Ovary (tissue), 10 donors: ENCODE measurements at regions of chr20 and their contacts with region 1.

Region 1: GRCh38 chr20:33731693-33732165 is at the start of gene ZNF341:
- DNase-seq: peak; percentile 91 to 96 (median 93)
- H3K4me3 ChIP-seq: peak within 1 kb of the TSS; percentile 37
- H3K27ac ChIP-seq: peak within 1 kb of the TSS; percentile 51 to 95
- H3K4me1 ChIP-seq: peaks cover 13% of the 10 kb centered on the region
- H3K27me3 ChIP-seq: no peaks in the 10 kb centered on the region
- CTCF ChIP-seq: peak; percentile 96 to 99 (median 96)
- EP300 ChIP-seq: no peak
- POLR2A ChIP-seq: no peak
- total RNA-seq, gene ZNF341: 1.2 to 3.8 (median 1.6) TPM

Region 2: DNA sequence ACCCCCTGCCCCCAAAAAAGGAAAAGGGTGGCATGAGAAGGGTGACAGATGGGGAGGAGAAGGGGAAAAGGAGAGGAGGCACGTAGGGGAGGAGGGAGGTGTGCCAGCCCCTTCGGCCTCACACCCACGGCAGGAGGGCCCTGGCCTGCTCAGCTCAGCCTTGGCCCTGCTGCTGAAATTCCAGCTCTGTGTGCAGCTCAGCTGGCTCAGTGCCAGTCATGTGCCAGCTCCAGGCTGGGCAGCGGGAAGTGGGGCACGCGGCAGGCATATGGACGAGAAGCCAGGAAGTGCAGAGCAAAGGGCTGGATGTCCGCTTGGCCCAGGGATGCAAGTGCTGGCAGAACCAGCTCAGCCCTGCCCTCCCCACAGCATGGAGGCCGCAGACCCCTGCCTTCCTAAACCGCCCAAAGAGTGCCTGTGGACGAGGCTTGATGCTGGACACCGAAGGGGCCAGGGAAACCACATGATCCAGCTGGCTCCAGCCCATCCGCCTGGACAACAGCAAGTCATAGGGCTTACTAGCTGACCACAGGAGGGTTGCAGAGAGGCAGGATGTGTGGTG is 1206.8 kb before region 1 on chr20:
- intact Hi-C with region 1: no loop called
- DNase-seq: peak in 1 of 5 donors; percentile 15
- H3K4me3 ChIP-seq: no peak overlapping the region
- H3K27ac ChIP-seq: no peak overlapping the region
- H3K4me1 ChIP-seq: peaks cover 10% of the 10 kb centered on the region
- H3K27me3 ChIP-seq: no peaks in the 10 kb centered on the region
- CTCF ChIP-seq: no peak
- EP300 ChIP-seq: no peak
- POLR2A ChIP-seq: no peak

Region 3: GRCh38 chr20:33666293-33667244 is 65.2 kb before region 1 on chr20 and contains the start of gene ACTL10:
- intact Hi-C with region 1: loop called in 2 of 4 experiments (anchors 5 to 10 kb)
- DNase-seq: peak; percentile 99 to 100 (median 99)
- H3K4me3 ChIP-seq: peak within 1 kb of the TSS; percentile 49
- H3K27ac ChIP-seq: peak within 1 kb of the TSS; percentile 55 to 94
- H3K4me1 ChIP-seq: peaks cover 11% of the 10 kb centered on the region
- H3K27me3 ChIP-seq: no peaks in the 10 kb centered on the region
- CTCF ChIP-seq: peak in 2 of 3 donors; percentile 59 to 60
- EP300 ChIP-seq: no peak
- POLR2A ChIP-seq: peak; percentile 65
- total RNA-seq, gene ACTL10: 1.0 to 2.4 (median 1.7) TPM